ENCODE measurements at regions of chr3 and their contacts with region 1.

Region 1: DNA sequence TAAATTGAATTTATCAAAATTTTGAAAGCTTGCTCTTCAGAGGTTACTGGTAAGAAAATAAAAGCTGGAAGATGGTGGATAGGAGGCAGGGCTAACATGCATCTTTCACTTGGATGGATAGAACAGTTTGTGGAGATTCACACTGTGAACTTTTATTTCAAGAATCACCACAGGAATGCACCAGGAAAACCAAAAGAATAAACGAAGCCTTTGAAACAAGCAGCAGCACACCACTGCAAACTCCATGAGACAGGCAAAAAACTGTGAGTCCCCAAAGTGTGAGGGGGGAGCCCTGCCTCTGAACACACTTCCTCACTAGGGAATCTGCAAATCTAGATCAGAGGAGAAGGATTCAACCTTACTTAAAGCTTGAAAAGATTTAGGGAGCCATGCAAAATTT is 122.2 kb downstream of the RTP4 start:
- DNase-seq: no peak
- ATAC-seq: no peak
- H3K4me3 ChIP-seq: no peak overlapping the region
- H3K27ac ChIP-seq: no peak overlapping the region
- H3K4me1 ChIP-seq: no peaks in the 10 kb centered on the region
- H3K27me3 ChIP-seq: no peaks in the 10 kb centered on the region
- CTCF ChIP-seq: no peak
- POLR2A ChIP-seq: no peak

Region 2: GRCh38 chr3:185878920-185879319 is 1611.4 kb before region 1 on chr3:
- in situ Hi-C with region 1: loop called in 1 of 4 experiments (anchors 25 kb)
- intact Hi-C with region 1: no loop called
- DNase-seq: no peak
- ATAC-seq: no peak
- H3K4me3 ChIP-seq: no peak overlapping the region
- H3K27ac ChIP-seq: no peak overlapping the region
- H3K4me1 ChIP-seq: no peaks in the 10 kb centered on the region
- H3K27me3 ChIP-seq: no peaks in the 10 kb centered on the region
- CTCF ChIP-seq: no peak
- POLR2A ChIP-seq: no peak

Measured in gastrocnemius medialis (tissue), 4 donors.